ENCODE measurements at regions of chr5 and their contacts with region 1.

Region 1: DNA sequence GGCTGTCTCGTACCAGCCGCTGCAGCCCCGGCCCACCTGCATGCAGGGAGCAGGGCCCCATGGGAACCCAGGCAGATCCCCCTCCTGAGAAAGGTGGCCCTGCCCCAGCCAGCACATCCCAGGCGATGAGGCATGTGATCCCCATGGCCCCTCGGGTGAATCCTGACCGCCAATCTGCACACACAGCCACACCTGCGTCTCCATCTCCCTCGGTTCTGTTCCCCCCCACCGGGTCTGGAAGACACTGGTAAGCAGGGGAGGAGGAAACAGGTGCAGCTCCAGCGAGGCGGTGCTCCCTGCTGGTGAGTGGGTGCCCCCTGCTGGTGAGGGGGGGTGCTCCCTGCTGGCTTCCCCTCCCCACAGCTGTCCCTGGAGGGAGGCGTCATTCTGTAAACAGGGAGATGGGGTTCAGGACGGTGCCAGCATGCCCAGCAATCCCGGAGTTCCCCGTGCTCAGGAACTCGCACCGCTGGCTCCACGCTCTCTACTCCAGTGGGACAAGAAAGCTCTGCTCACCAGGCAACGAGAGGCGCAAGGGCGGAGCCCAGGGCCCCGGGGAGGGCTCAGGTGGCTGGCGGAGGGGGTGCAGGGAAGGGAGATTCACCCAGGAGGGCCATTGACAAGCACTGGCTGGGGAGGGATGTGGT is 28.4 kb upstream of the SLC12A7 start:
- DNase-seq: peak; percentile 86 to 87
- ATAC-seq: peak; percentile 77 to 91 (median 87)
- H3K4me3 ChIP-seq: no peak overlapping the region
- H3K27ac ChIP-seq: no peak overlapping the region
- H3K4me1 ChIP-seq: peaks cover 0 to 33% (median 21%) of the 10 kb centered on the region in 9 donors
- H3K27me3 ChIP-seq: no peaks in the 10 kb centered on the region
- CTCF ChIP-seq: peak; percentile 85 to 97 (median 94)

Region 2: GRCh38 chr5:989961-990530 is 150.2 kb before region 1 on chr5:
- intact Hi-C with region 1: loop called in 4 of 10 experiments (anchors 1 to 10 kb)
- DNase-seq: peak; percentile 73 to 81
- ATAC-seq: peak; percentile 63 to 88 (median 76)
- H3K4me3 ChIP-seq: no peak overlapping the region
- H3K27ac ChIP-seq: peak overlapping the region in 9 of 10 donors; percentile 22 to 81 (median 65)
- H3K4me1 ChIP-seq: peaks cover 6 to 56% (median 26%) of the 10 kb centered on the region in 9 donors
- H3K27me3 ChIP-seq: peaks cover 0 to 8% (median 0%) of the 10 kb centered on the region in 7 donors
- CTCF ChIP-seq: peak; percentile 33 to 84 (median 70)

Region 3: GRCh38 chr5:1011226-1011631 is 129.1 kb before region 1 on chr5:
- intact Hi-C with region 1: loop called in 7 of 10 experiments (anchors 5 to 10 kb)
- DNase-seq: peak in 1 of 2 donors; percentile 16
- ATAC-seq: no peak
- H3K4me3 ChIP-seq: no peak overlapping the region
- H3K27ac ChIP-seq: no peak overlapping the region
- H3K4me1 ChIP-seq: peaks cover 8 to 38% (median 21%) of the 10 kb centered on the region in 9 donors
- H3K27me3 ChIP-seq: peaks cover 0 to 56% (median 27%) of the 10 kb centered on the region in 7 donors
- CTCF ChIP-seq: peak in 6 of 9 donors; percentile 19 to 33 (median 27)

Region 4: DNA sequence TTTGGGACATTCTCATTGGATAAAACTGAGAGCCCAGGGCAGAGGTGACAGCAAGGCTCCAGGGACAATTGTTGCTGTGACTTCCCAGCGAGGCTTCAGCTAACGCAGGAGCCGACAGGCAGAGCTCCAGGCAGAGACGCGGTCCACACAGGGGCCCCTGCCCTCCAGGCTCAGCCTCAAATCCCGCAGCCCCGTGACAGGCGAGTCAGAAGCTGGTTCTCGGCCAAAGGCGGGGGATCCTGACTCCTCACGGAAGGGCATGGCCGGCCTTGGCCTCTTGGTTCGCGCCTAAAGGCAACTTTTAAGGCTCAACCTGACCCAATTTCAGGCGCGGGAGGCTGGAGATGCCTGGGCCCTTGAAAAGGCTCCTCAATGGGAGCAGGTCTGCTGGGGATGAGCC is 49.8 kb before region 1 on chr5:
- intact Hi-C with region 1: loop called in 2 of 10 experiments (anchors 5 kb)
- DNase-seq: peak; percentile 66 to 70
- ATAC-seq: peak; percentile 5 to 72 (median 48)
- H3K4me3 ChIP-seq: no peak overlapping the region
- H3K27ac ChIP-seq: peak overlapping the region in 9 of 10 donors; percentile 59 to 77 (median 70)
- H3K4me1 ChIP-seq: peaks cover 17 to 68% (median 26%) of the 10 kb centered on the region in 9 donors
- H3K27me3 ChIP-seq: no peaks in the 10 kb centered on the region
- CTCF ChIP-seq: no peak

Region 5: DNA sequence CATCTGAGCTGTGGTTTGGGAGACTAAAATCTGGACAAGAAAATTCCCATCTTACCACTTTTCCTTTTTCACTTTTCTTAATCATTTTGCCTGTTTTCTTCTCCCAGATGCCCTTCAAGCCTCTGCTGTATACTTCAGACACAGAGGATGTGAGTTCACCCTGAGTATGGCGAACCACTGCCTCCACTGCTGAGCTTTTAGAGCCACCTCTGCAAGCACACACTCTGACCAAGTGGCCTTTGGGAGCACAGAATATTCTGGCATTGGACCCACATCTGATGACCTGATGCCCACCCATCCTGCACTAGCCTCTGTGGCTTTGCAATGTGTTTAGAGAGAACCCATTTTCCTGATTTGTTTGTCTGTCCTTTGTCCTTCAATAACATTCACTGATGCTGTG is 122.1 kb after region 1 on chr5:
- intact Hi-C with region 1: no loop called
- DNase-seq: no peak
- ATAC-seq: no peak
- H3K4me3 ChIP-seq: no peak overlapping the region
- H3K27ac ChIP-seq: no peak overlapping the region
- H3K4me1 ChIP-seq: no peaks in the 10 kb centered on the region
- H3K27me3 ChIP-seq: peaks cover 0 to 5% (median 0%) of the 10 kb centered on the region in 7 donors
- CTCF ChIP-seq: no peak

Region 6: DNA sequence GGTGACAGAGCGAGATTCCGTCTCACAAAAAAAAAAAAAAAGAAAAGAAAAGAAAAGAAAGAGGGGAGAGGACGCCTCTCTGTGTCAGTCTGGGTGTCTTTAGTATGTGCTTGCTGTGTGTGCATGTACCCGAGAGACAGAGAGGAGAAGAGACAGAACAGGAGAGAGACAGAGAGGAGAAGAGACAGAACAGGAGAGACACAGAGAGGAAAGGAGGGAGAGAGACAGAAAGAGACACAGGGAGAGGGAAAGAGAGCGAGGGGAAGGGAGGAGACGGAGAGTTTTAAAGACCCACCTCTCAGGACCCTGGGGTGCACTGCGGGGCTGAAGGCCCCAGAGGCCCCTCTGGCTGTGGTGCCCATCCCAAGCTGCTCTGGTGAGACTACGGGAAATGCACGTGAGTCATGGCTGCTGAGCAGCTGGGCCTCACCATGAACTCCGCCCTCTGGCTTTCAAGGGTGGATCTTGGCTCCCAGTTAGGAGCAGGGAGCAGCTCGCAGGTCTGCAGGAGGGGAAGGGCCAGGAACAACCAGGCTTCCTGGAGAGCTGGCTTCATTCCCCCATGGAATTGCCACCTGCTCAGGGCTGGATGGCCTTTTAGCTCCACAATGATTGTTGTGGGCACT is 297.0 kb after region 1 on chr5:
- intact Hi-C with region 1: no loop called
- DNase-seq: no peak
- ATAC-seq: peak in 1 of 8 donors; percentile 19
- H3K4me3 ChIP-seq: no peak overlapping the region
- H3K27ac ChIP-seq: no peak overlapping the region
- H3K4me1 ChIP-seq: no peaks in the 10 kb centered on the region
- H3K27me3 ChIP-seq: peaks cover 9 to 49% (median 38%) of the 10 kb centered on the region in 7 donors
- CTCF ChIP-seq: no peak

Measured in heart right ventricle (tissue), 16 donors.